ENCODE measurements at regions of chr3 and their contacts with region 1.

Region 1: DNA sequence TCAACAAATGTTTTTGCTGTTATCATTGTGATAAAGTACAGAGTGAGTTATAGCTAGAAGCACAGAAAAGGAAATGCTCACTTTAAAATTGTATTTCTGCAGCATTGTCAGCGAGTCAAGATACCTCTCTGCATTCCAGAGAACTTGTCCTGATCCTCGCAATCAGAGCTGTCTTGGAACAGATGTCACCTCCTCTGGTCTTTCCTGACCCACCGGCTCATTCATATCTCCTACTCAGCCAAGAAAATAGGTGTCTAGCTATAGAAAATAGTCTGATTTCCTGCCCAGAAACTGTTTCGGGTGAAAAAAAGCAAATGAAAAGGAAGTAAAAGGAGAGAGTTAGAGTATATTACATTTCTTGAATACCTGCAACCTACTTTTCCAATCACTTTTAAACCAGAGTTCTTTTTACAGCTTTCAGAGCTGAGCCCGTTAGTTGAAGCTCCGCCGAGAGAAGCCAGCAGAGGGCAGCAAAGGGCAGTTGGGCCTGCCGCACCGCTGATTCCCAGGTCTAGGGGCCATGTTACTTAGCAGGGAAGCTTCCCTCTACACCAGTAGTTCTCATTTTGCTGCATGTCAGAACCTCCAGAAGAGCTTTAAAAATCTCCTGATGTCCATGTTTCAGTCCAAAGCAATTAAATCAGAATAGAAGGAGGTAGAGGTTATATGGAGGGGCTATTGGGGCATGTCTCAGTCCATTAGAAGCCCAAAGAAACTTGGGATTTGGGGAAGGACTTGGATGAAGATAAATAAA is 185.7 kb upstream of the THRB start:
- DNase-seq: peak in 5 of 9 experiments; percentile 13 to 48 (median 24)
- ATAC-seq: no peak
- H3K4me3 ChIP-seq: no peak overlapping the region
- H3K4me3 Mint-ChIP-seq: no peak overlapping the region
- H3K27ac ChIP-seq: no peak overlapping the region
- H3K27ac Mint-ChIP-seq: no peak overlapping the region
- H3K4me1 ChIP-seq: no peaks in the 10 kb centered on the region
- H3K4me1 Mint-ChIP-seq: no peaks in the 10 kb centered on the region
- H3K27me3 ChIP-seq: no peaks in the 10 kb centered on the region
- H3K27me3 Mint-ChIP-seq: no peaks in the 10 kb centered on the region
- CTCF ChIP-seq: no peak

Region 2: DNA sequence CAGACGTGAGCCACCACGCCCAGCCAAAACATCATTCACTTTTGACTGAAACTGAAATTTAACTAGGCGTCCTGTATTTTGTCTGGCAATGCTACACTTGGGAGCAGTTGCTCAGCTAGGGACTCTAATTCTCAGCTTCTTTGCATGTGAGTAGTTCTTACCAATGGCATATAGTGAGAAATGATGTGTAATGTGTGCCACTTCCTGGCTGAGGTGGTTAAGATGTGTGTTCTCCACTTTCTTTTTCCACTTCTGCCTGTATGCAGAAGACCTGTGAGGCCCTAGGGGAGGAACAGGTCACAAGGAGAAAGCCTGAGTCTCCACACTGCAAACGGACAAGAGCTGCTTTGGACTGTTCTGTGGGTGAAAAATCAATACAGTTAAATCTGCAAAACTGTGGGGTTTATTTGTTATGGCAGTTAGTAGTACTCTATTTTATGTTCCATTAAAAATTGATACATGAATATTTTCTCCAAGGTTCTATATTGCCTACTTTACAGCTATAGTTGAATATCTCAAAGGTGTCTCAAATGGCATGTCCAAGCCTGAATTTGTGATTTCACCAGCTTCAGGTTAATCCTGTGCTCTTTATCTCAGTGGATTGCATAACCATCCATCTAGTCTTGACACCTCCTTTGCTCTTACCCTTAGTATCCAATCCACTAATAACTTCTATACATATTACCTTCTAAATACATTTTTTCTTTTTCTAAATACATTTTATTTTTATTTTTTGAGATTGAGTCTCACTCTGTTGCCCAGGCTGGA is 676.0 kb before region 1 on chr3:
- CTCF ChIA-PET with region 1: no interaction called
- POLR2A ChIA-PET with region 1: no interaction called
- intact Hi-C with region 1: loop called in 1 of 2 experiments (anchors 10 kb)
- DNase-seq: no peak
- ATAC-seq: no peak
- H3K4me3 ChIP-seq: no peak overlapping the region
- H3K4me3 Mint-ChIP-seq: no peak overlapping the region
- H3K27ac ChIP-seq: no peak overlapping the region
- H3K27ac Mint-ChIP-seq: no peak overlapping the region
- H3K4me1 ChIP-seq: no peaks in the 10 kb centered on the region
- H3K4me1 Mint-ChIP-seq: no peaks in the 10 kb centered on the region
- H3K27me3 ChIP-seq: no peaks in the 10 kb centered on the region
- H3K27me3 Mint-ChIP-seq: no peaks in the 10 kb centered on the region
- CTCF ChIP-seq: no peak